HCT116 (cell line): ENCODE measurements at regions of chr15 and their contacts with region 1.

Region 1: GRCh38 chr15:49155110-49155833 is at the start of gene COPS2:
- DNase-seq: peak; percentile 98
- ATAC-seq: peak; percentile 97
- H3K4me3 ChIP-seq: peak within 1 kb of the TSS; percentile 92 to 94
- H3K27ac ChIP-seq: peak within 1 kb of the TSS; percentile 46
- H3K4me1 ChIP-seq: peaks cover 16 to 28% of the 10 kb centered on the region in 2 experiments
- H3K27me3 ChIP-seq: no peaks in the 10 kb centered on the region
- CTCF ChIP-seq: no peak
- POLR2A ChIP-seq: no peak
- RAD21 ChIP-seq: no peak
- total RNA-seq, gene COPS2: 93.6 TPM

Region 2: DNA sequence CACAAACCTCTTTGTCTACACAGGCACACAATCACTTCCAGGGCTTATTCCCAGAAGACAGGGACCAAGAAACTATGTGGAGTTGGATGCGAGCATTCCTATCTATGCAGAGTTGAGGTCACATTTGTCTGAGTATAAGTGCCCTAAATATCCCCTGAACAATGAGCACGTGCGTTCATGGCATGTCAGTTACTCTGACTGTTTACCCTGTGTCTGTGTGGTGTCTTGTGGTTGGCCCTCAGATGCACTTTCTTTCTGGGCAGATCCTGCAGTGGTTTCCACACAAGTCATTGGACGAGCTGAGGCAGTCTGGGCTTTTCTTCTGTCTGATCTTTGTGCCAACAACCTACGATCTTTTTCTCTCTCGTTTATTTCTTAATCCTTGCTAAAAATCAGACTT is 644.3 kb before region 1 on chr15:
- CTCF ChIA-PET with region 1: no interaction called
- POLR2A ChIA-PET with region 1: no interaction called
- RAD21 ChIA-PET with region 1: no interaction called
- intact Hi-C with region 1: no loop called
- DNase-seq: no peak
- ATAC-seq: no peak
- H3K4me3 ChIP-seq: no peak overlapping the region
- H3K27ac ChIP-seq: no peak overlapping the region
- H3K4me1 ChIP-seq: no peaks in the 10 kb centered on the region; a peak in 1 of 4 replicates
- H3K27me3 ChIP-seq: no peaks in the 10 kb centered on the region
- CTCF ChIP-seq: no peak
- POLR2A ChIP-seq: no peak
- RAD21 ChIP-seq: no peak

Region 3: GRCh38 chr15:49169880-49170597 is 14.8 kb after region 1 on chr15 and contains the start of gene GALK2:
- CTCF ChIA-PET with region 1: interaction called, 3 read pairs
- POLR2A ChIA-PET with region 1: interaction called, 16 read pairs
- RAD21 ChIA-PET with region 1: no interaction called
- intact Hi-C with region 1: no loop called
- DNase-seq: peak; percentile 75
- ATAC-seq: peak; percentile 100
- H3K4me3 ChIP-seq: peak within 1 kb of the TSS; percentile 67 to 68
- H3K27ac ChIP-seq: peak within 1 kb of the TSS; percentile 58
- H3K4me1 ChIP-seq: peaks cover 6 to 14% of the 10 kb centered on the region in 2 experiments; a peak in 3 of 4 replicates
- H3K27me3 ChIP-seq: no peaks in the 10 kb centered on the region
- CTCF ChIP-seq: no peak
- POLR2A ChIP-seq: peak; percentile 78
- RAD21 ChIP-seq: no peak
- total RNA-seq, gene GALK2: 18.7 TPM